Activated CD4-positive, alpha-beta T cell treated with anti-CD3 and anti-CD28 coated beads, Interleukin-2, amount 10 ng/mL, durations not matched to agents 24 days and 14 days (primary cell): ENCODE measurements at regions of chr5 and their contacts with region 1.

Region 1: GRCh38 chr5:139262742-139263445 is 30.6 kb upstream of the MATR3 start:
- DNase-seq: peak; percentile 90
- H3K4me3 Mint-ChIP-seq: no peak overlapping the region
- H3K27ac Mint-ChIP-seq: no peak overlapping the region
- H3K4me1 Mint-ChIP-seq: peaks cover 2% of the 10 kb centered on the region
- H3K27me3 Mint-ChIP-seq: peaks cover 28% of the 10 kb centered on the region

Region 2: DNA sequence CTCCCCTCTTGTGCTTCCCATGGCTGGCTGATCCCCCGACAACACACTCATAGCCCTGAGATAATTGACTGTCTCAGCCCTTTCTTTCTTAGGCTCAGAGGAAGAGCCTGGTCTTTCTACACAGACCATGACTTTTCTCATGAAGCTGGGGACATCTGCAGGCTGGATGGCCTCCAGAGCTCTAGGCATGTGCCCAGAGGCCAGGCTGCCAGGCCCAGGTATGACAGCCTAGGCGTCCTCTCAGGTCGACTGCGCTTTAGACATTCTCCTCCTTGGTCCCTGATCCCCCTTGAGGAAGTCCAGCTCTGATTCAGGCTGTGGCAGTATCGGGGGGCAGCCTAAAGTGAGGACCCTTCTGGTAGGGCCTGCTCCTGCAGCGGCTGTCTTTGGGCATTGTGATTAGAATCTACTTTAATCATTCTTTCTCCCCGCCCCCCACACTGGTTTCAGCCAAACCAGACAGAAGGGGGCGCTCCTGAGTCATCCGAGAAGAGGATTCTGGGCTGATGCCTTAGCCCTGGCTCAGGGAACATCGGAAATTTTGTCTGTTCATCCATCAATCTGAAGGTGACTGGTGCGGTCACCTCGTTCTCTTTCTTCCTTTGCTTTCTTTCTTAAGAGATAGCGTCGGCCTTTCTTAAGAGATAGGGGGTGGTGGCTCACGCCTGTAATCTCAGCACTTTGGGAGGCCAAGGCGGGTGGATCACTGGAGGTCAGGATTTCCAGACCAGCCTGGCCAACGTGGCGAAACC is 621.2 kb before region 1 on chr5:
- intact Hi-C with region 1: loop called (anchors 2 kb)
- DNase-seq: peak; percentile 92
- H3K4me3 Mint-ChIP-seq: no peak overlapping the region
- H3K27ac Mint-ChIP-seq: no peak overlapping the region
- H3K4me1 Mint-ChIP-seq: peaks cover 2% of the 10 kb centered on the region
- H3K27me3 Mint-ChIP-seq: peaks cover 74% of the 10 kb centered on the region

Region 3: DNA sequence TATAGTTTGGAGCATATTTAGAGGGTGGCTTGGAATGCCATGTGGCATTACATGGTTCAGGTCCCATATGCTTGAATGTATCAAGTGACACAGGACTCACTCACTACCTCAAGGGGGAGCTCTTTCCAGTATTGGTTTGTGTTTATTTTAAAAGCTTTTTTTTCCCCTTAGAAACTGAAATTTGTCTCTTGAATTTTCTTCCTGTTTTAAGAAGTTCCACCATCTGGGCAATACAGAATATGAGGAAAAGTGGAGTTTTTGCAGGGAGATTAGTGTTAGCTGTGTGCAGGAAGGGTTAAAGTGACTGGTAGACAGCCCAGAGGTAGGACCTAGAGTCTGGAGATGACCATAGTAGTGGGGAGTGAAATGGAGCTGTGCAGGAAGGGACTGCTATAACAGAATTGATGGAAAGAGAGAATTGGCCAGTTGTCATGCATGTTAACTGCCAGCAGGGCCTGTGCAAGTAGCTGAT is 473.1 kb before region 1 on chr5:
- intact Hi-C with region 1: loop called (anchors 2 kb)
- DNase-seq: peak; percentile 70
- H3K4me3 Mint-ChIP-seq: no peak overlapping the region
- H3K27ac Mint-ChIP-seq: no peak overlapping the region
- H3K4me1 Mint-ChIP-seq: peaks cover 11% of the 10 kb centered on the region
- H3K27me3 Mint-ChIP-seq: peaks cover 11% of the 10 kb centered on the region

Region 4: DNA sequence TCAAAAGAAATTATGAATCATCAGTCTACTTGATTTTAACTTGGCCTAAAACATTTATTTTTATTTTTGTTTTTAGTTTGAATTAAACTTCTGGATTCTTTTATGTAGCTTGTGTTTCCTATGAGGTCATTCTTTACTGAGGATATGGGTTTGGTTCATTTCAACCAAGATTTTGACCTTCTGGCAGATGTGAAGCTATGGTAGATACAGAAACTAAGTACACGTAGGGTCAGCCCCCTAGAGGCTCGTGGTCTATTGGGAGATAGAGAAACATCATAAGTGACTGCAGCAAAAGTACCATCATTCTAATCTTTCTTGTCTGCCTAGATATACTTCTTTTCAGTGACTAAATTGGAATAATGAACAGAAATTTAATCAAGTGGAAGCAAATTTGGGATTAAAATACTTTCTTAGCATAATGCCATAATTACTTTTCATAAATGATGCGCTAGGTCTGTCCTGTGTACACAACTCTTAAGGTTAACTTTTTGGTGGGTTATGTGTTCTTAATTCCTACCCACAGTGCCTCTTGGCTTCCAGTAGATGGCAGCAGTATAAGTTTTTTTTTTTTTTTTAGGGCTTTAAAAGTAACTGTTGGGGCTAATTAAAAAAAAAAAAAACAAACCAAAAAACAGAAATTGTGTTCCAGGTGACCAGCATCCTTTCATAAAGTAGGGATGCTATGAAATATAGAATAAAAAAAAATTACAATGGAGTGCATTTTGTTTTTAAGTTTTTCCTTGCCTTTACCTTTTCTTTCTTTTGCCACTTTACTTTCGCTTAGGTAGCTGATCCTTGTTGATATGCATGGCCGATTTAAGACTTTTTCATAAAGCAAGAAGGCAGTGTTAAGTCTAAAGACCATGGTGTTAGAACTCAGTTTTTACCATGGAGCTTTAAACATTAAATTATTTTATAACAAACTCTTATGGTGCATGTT is 437.7 kb before region 1 on chr5:
- intact Hi-C with region 1: loop called (anchors 1 kb)
- DNase-seq: no peak
- H3K4me3 Mint-ChIP-seq: no peak overlapping the region
- H3K27ac Mint-ChIP-seq: no peak overlapping the region
- H3K4me1 Mint-ChIP-seq: peaks cover 8% of the 10 kb centered on the region
- H3K27me3 Mint-ChIP-seq: no peaks in the 10 kb centered on the region

Region 5: GRCh38 chr5:139287890-139288635 is 25.2 kb after region 1 on chr5:
- intact Hi-C with region 1: no loop called
- DNase-seq: no peak
- H3K4me3 Mint-ChIP-seq: no peak overlapping the region
- H3K27ac Mint-ChIP-seq: no peak overlapping the region
- H3K4me1 Mint-ChIP-seq: peaks cover 7% of the 10 kb centered on the region
- H3K27me3 Mint-ChIP-seq: no peaks in the 10 kb centered on the region